Adrenal gland (tissue), 19 donors: ENCODE measurements at regions of chr2 and their contacts with region 1.

Region 1: DNA sequence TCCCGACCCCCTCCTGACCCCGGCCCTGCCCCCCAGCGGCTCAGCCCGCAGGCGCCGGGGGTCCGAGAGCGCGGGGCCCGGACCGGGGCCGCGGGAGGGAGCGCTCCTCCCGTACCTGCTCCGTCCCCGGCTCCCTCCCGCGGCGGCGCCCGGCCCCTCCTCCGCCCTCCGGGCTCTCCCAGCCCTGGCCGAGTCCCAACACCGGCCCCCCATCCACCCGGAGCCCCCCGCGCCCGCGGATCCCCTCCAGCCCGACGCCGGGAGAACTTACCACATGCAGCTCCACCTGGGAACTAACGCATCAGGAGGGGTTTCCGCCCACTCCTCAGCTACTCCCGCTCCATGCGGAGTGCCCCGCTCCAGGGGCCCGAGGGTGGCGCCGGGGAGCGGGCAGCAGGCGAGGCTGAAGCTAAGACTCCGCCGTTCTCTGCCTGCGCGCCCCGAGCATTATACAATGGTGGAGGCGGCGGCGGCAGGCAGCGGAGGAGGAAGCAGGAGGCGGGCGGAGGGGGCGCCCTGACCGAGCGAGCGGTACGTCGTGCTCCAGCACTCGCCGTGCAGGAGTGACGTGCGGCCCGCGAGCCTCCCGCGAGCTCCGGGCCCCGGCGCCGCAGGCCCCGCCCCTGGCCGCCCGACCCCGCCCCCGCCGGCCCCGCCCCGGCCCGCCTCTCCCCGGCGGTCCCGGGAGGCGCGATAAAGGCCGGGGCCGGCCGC is at the start of gene SERTAD2:
- DNase-seq: peak; percentile 87 to 93 (median 90)
- H3K4me3 ChIP-seq: peak within 1 kb of the TSS; percentile 43 to 97 (median 76)
- H3K27ac ChIP-seq: peak within 1 kb of the TSS; percentile 97 to 100 (median 99)
- H3K4me1 ChIP-seq: peaks cover 24 to 36% of the 10 kb centered on the region in 2 donors
- H3K27me3 ChIP-seq: no peaks in the 10 kb centered on the region
- CTCF ChIP-seq: peak in 3 of 6 experiments; percentile 1 to 17 (median 13)
- POLR2A ChIP-seq: peak; percentile 59 to 95
- total RNA-seq, gene SERTAD2: 5.8 to 15.8 (median 12.4) TPM

Region 2: GRCh38 chr2:64742678-64743077 is 89.2 kb after region 1 on chr2:
- intact Hi-C with region 1: loop called in 1 of 2 experiments (anchors 5 kb)
- DNase-seq: no peak
- H3K4me3 ChIP-seq: no peak overlapping the region
- H3K27ac ChIP-seq: no peak overlapping the region
- H3K4me1 ChIP-seq: peaks cover 7 to 31% of the 10 kb centered on the region in 2 donors
- H3K27me3 ChIP-seq: no peaks in the 10 kb centered on the region
- CTCF ChIP-seq: no peak
- POLR2A ChIP-seq: no peak

Region 3: DNA sequence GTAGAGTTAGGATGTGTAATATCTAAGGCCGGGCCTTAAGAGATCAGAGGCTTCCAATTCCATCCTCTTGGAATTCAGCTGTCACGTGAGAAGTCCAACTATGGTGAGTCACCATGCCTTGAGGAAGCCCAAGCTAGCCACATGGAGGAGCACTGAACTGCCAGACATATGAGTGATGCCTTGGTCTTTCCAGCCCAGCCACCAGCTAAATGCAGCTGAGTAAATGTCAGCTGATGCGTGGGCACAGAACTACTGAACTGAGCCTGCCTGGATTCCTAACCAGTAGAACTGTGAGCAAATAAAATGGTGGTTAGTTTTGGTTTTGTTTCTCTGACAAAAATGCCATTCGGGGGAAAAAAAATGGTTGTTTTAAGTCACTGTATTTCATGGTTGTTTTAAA is 153.9 kb after region 1 on chr2:
- intact Hi-C with region 1: no loop called
- DNase-seq: peak in 4 of 7 donors; percentile 14 to 63 (median 46)
- H3K4me3 ChIP-seq: no peak overlapping the region
- H3K27ac ChIP-seq: no peak overlapping the region
- H3K4me1 ChIP-seq: no peaks in the 10 kb centered on the region
- H3K27me3 ChIP-seq: no peaks in the 10 kb centered on the region
- CTCF ChIP-seq: no peak
- POLR2A ChIP-seq: no peak

Region 4: DNA sequence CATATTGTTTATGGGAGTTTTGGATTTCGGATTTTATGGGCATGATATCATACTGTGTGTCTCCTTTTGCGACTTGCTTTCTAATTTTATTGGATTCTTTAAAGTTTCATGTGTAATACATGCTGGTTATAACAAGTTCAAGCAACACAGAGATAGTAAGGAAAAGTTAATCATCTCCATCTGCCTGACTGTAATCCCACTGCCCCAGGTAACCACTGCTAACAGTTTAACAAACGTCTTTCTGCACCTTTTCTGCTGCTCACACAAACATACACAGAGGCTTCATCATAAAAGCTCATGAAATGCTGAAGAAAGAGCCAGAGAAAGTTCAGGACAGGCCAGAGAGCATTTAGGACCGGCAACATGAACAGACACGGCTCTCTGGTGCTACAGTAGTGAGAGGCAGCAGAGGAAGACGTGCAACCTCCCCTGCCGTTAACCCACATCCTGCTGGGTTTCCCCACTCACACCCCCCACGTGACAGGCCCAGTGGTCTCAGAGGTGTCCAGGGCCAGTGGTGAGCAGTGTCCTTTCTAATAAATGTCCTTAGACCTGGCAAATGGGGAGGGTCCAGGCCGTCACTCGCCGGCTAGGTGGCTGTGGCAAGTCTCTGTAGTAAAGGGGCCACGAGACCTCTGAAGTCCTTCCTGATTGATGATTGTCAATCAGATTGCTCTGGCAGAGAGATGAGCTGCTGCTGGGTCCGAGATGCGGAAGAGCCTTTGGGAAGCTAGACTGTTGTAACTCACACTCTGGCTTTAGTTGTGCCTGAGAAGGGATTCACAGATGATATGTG is 292.7 kb after region 1 on chr2:
- intact Hi-C with region 1: no loop called
- DNase-seq: no peak
- H3K4me3 ChIP-seq: no peak overlapping the region
- H3K27ac ChIP-seq: no peak overlapping the region
- H3K4me1 ChIP-seq: peaks cover 0 to 17% of the 10 kb centered on the region in 2 donors
- H3K27me3 ChIP-seq: no peaks in the 10 kb centered on the region
- CTCF ChIP-seq: no peak
- POLR2A ChIP-seq: no peak